Heart right ventricle (tissue), 16 donors: ENCODE measurements at regions of chr10 and their contacts with region 1.

Region 1: DNA sequence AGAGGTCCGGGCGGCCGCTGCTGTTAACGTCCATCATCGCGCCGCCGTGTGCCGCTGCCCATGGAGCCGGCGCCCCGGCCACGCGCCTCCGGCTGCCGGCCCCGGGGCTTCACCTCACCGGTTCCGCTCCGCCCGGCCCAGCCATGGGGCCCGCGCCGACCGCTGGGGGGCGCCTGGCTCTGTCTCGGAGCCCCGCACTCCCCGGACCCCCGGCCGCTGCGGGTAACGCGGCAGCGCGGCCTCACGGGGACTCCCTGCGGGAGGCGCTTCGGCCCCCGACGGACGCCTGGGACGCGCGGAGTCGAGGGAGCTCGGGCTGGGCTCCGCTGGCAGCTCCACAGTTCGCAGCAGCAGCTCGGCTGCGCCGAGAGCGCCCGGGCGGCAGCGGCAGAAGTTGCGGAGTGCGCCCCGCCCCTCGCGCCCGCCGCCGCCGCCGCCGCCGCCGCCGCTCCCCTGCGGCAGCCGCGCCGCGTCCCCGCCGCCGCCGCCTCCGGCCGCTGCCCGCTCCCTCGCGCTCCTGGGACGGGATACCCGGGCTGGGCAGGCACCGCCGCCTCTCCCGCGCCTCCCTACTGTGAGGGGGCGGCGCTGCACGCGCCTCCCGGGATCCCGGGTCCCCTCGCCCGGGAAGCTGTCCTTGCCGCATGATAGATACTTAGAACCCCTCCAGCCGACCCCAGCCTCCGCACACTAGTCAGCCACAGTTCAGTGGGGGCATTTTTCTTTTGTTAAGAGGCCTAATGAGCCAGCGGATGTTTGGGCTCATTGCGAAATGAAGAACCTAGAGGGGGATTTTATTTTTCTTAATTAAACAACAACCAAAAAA is at the start of gene HTR7:
- DNase-seq: peak; percentile 30 to 65
- ATAC-seq: peak; percentile 68 to 92 (median 80)
- H3K4me3 ChIP-seq: peak within 1 kb of the TSS in 9 of 10 donors; percentile 35 to 67 (median 57)
- H3K27ac ChIP-seq: peak within 1 kb of the TSS in 5 of 10 donors; percentile 31 to 74 (median 35)
- H3K4me1 ChIP-seq: peaks cover 0 to 27% (median 7%) of the 10 kb centered on the region in 9 donors
- H3K27me3 ChIP-seq: peaks cover 0 to 63% (median 49%) of the 10 kb centered on the region in 7 donors
- CTCF ChIP-seq: peak; percentile 38 to 72 (median 60)
- total RNA-seq, gene HTR7: 0.09 to 0.28 (median 0.16) TPM in 8 of 10 donors, not detected in the others

Region 2: GRCh38 chr10:90751107-90751997 is 106.5 kb before region 1 on chr10:
- intact Hi-C with region 1: loop called in 7 of 10 experiments (anchors 2 to 10 kb)
- DNase-seq: no peak
- ATAC-seq: peak in 2 of 8 donors; percentile 34 to 67
- H3K4me3 ChIP-seq: no peak overlapping the region
- H3K27ac ChIP-seq: no peak overlapping the region
- H3K4me1 ChIP-seq: no peaks in the 10 kb centered on the region
- H3K27me3 ChIP-seq: peaks cover 0 to 33% (median 18%) of the 10 kb centered on the region in 7 donors
- CTCF ChIP-seq: peak in 8 of 9 donors; percentile 29 to 78 (median 65)

Region 3: DNA sequence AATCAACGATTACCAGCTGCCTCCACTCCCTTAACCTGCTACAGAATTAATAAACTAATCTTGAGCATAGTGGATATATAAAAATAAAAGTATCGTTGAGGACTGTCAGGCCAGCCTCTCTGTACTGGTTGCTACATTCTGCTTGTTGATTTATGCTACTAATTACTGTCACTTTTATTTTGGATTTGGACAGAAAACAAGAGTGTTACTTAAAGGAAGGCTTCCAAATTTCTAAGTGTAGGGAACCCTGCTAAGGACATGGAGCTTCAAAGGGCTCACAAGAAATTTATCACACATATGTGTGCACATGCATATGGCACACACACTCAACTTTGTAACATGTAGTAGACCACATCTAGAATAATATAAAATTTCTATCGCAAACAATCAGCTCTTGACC is 204.2 kb after region 1 on chr10:
- intact Hi-C with region 1: no loop called
- DNase-seq: no peak
- ATAC-seq: no peak
- H3K4me3 ChIP-seq: no peak overlapping the region
- H3K27ac ChIP-seq: no peak overlapping the region
- H3K4me1 ChIP-seq: peaks cover 0 to 7% (median 0%) of the 10 kb centered on the region in 9 donors
- H3K27me3 ChIP-seq: no peaks in the 10 kb centered on the region
- CTCF ChIP-seq: no peak